ENCODE measurements at regions of chr6 and their contacts with region 1.

Region 1: DNA sequence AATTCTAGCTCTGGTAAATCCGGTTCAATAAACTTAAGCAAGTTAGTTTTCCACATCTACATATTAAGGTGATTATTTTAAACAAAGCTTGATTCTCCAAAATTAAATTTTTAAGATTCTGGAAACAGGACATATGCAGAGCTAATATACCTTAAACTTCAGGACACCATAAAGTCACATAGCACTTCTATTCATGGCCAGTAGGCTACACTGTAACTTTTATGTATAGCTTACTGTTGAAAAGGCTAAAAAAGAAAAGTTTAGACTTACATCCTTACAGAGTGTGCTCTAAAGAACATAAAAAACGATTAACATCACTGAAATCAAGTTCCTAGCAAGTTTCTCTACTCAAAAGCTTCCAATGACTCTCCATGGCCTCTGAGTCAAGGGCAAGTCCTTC is 224.7 kb downstream of the PTPRK start:
- DNase-seq: no peak
- ATAC-seq: no peak
- H3K4me3 ChIP-seq: no peak overlapping the region
- H3K27ac ChIP-seq: no peak overlapping the region
- H3K4me1 ChIP-seq: no peaks in the 10 kb centered on the region
- H3K27me3 ChIP-seq: no peaks in the 10 kb centered on the region
- CTCF ChIP-seq: peak in 1 of 9 donors; percentile 17

Region 2: GRCh38 chr6:128314190-128314589 is 18.5 kb after region 1 on chr6:
- intact Hi-C with region 1: loop called in 1 of 10 experiments (anchors 2 kb)
- DNase-seq: no peak
- ATAC-seq: no peak
- H3K4me3 ChIP-seq: no peak overlapping the region
- H3K27ac ChIP-seq: no peak overlapping the region
- H3K4me1 ChIP-seq: peaks cover 0 to 39% (median 11%) of the 10 kb centered on the region in 9 donors
- H3K27me3 ChIP-seq: no peaks in the 10 kb centered on the region
- CTCF ChIP-seq: no peak

Region 3: DNA sequence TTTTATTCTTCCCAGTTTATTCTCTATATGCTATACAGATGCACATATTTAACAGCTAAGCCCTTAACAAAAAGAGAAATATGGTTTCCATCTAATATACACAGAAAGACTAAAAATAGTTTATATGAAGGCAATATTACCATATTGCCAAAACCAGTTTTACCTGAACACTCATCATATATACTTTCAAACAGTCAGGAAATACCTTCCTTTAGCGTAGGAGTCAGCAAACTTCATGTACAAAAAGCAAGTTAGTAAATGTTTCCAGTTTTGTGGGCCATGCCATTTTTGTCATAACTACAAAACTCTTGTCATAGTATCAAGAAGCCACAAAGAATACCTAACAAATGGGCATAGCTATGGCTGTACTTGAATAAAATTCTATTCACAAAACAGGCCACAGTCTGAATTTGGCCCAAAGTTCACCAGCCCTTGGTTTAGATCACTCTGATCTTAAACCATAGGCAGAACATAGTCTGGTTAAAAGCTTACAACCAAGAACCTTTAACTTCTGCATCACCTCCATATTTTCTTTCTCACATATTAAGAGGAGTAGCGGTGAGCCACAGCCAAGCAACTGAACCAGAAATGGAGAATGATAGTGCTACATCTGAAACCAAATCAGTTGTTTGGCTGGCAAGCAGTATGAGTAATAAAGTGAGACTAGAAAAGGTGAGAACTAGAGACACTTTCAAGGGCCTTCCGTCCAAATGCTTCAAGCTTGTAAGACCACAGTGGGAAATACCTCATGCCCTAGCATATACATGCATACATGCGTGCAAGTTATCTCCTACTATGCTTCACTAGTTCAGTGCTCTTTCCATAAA is 108.2 kb after region 1 on chr6:
- intact Hi-C with region 1: no loop called
- DNase-seq: no peak
- ATAC-seq: no peak
- H3K4me3 ChIP-seq: no peak overlapping the region
- H3K27ac ChIP-seq: no peak overlapping the region
- H3K4me1 ChIP-seq: peaks cover 0 to 15% (median 4%) of the 10 kb centered on the region in 9 donors
- H3K27me3 ChIP-seq: no peaks in the 10 kb centered on the region
- CTCF ChIP-seq: no peak

Measured in heart right ventricle (tissue), 16 donors.